ENCODE measurements at regions of chr4 and their contacts with region 1.

Region 1: DNA sequence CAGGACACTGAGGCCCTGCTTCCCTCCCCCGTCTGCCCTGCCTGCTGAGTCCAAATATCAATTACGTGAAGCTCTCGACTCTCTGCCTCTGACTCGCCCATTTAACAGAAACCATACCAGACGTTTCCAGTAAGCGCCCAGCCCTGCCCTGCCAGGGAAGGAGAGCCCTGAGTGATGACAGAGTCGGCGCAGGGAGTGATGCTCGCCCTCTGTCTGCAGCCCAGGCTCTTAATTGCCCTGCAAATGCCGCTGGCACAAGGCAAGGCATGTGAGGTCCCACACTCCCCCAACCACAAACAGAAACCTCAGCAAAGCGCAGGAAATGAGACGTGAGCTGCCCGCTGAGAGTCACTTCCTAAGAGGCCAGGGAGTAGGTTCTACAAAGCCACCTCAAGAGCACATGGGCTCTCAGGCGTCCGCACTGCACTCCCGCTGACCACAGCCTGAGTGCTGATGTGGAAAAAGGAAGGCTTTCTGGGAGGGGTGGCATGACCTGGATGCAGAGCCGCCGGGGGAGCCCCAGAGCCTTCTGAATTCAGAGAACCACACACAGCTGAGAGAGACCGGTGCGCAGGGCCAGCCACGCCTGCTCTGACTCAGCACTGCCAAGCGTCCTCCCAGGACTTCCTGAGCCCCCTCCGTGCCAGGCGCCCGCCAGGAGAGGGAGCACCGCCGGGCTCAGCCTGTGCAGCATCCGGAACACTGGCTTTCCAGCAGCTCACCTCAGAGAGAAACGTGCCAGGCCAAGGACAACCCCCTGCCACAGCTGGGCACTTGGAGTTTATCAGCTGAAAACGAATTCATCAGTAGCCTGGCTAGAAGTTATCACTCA is 5.3 kb downstream of the ZFYVE28 start:
- DNase-seq: peak; percentile 99 to 100 (median 100)
- H3K4me3 ChIP-seq: peak overlapping the region in 5 of 7 experiments; percentile 9 to 69 (median 55)
- H3K27ac ChIP-seq: peak overlapping the region in 1 of 2 experiments; percentile 59
- H3K4me1 ChIP-seq: peaks cover 8 to 61% (median 55%) of the 10 kb centered on the region in 4 experiments
- H3K27me3 ChIP-seq: peaks cover 0 to 31% (median 20%) of the 10 kb centered on the region in 5 experiments

Region 2: GRCh38 chr4:2354118-2354517 is 59.0 kb before region 1 on chr4:
- CTCF ChIA-PET with region 1: interaction called, 10 read pairs
- POLR2A ChIA-PET with region 1: no interaction called
- DNase-seq: peak; percentile 54 to 75 (median 67)
- H3K4me3 ChIP-seq: no peak overlapping the region
- H3K27ac ChIP-seq: no peak overlapping the region
- H3K4me1 ChIP-seq: no peaks in the 10 kb centered on the region
- H3K27me3 ChIP-seq: peaks cover 0 to 5% (median 0%) of the 10 kb centered on the region in 5 experiments

Region 3: GRCh38 chr4:2393353-2394270 is 19.5 kb before region 1 on chr4:
- CTCF ChIA-PET with region 1: interaction called, 19 read pairs
- POLR2A ChIA-PET with region 1: interaction called, 3 read pairs
- DNase-seq: peak in 1 of 3 donors; percentile 28
- H3K4me3 ChIP-seq: peak overlapping the region in 3 of 7 experiments; percentile 9 to 40 (median 34)
- H3K27ac ChIP-seq: peak overlapping the region in 1 of 2 experiments; percentile 30
- H3K4me1 ChIP-seq: peaks cover 5 to 36% (median 29%) of the 10 kb centered on the region in 4 experiments
- H3K27me3 ChIP-seq: peaks cover 0 to 15% (median 13%) of the 10 kb centered on the region in 5 experiments

Region 4: DNA sequence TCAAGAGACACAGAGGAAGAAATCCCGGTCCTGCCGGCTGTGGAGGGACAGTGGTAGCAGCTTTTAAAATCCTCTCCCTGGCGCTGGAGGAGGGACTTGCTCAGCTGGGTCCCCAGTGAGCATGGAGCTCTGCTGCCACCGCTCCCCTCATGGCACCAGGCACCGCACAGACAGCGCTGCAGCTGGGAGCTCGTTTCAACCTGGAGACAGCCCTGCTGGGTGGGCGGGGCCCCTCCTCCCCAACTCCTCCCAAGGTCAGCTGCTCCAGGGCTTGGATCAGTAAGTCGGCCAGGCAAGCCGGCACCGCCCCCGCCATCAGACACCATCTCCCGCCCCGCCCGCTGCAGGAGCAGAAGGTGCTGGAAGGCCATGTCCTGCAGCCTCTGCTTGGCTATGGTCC is 11.1 kb before region 1 on chr4:
- CTCF ChIA-PET with region 1: interaction called, 25 read pairs
- POLR2A ChIA-PET with region 1: interaction called, 7 read pairs
- DNase-seq: peak; percentile 29 to 52 (median 43)
- H3K4me3 ChIP-seq: peak overlapping the region in 5 of 7 experiments; percentile 10 to 65 (median 19)
- H3K27ac ChIP-seq: no peak overlapping the region
- H3K4me1 ChIP-seq: peaks cover 0 to 15% (median 13%) of the 10 kb centered on the region in 4 experiments
- H3K27me3 ChIP-seq: peaks cover 0 to 33% (median 13%) of the 10 kb centered on the region in 5 experiments

Region 5: DNA sequence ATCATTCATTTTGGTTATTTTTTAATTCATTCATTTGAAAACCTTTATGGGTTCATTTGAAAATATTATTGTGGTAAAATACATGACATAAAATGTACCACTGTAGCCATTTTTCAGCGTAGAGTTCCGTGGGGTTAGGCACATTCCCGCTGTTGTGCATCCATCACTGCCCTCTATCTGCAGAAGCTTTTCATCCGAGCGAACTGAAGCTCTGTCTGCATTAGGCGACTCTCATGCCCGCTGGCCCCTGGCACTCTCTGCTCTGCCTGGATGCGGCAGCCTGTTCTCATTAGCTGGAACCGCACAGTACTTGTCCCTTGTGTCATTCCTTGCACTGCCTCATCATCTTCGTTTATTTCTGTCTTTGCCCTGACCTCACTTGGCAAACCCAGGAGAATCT is 23.2 kb after region 1 on chr4:
- CTCF ChIA-PET with region 1: interaction called, 19 read pairs
- POLR2A ChIA-PET with region 1: no interaction called
- DNase-seq: peak in 2 of 3 donors; percentile 31 to 38
- H3K4me3 ChIP-seq: no peak overlapping the region
- H3K27ac ChIP-seq: no peak overlapping the region
- H3K4me1 ChIP-seq: peaks cover 0 to under 1% (median 0%) of the 10 kb centered on the region in 4 experiments
- H3K27me3 ChIP-seq: no peaks in the 10 kb centered on the region

Region 6: GRCh38 chr4:2441393-2442174 is 28.5 kb after region 1 on chr4:
- CTCF ChIA-PET with region 1: interaction called, 19 read pairs
- POLR2A ChIA-PET with region 1: no interaction called
- DNase-seq: peak; percentile 88 to 89 (median 89)
- H3K4me3 ChIP-seq: no peak overlapping the region
- H3K27ac ChIP-seq: no peak overlapping the region
- H3K4me1 ChIP-seq: peaks cover 0 to 16% (median 13%) of the 10 kb centered on the region in 4 experiments
- H3K27me3 ChIP-seq: no peaks in the 10 kb centered on the region

Region 7: DNA sequence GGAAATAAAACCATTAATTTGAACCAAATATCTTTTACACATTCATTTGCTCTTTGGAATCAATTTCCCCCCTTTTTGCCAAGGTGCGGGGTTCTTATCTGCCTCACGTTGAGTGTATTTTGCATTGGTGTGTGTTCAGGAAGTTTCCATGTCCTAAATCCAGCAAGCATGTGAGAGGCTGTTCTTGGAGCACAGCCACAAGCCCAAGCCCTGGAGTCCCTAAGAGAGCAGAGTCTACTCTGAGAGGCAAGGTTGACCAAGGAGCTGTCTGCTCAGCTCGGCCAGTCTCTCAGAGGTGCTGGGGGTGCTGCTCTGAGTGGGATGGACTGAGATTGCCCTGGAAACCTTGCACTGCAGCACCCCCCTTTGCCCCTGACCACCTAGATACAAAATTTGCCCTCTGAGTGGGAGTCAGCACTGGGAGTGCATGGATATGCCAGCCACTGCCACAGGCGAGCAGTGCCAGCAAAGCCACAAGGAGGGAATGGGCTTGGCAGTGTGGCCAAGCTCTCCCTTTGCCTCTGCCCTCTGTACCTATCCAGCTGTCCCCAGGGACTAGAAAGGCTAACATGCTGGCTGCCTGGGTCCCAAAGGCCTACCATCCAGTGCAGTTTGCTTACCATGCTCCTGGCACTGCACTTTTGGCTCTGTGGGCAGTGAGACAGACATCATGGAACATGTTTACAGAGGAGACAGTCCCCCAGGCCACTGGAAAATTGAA is 102.9 kb after region 1 on chr4:
- CTCF ChIA-PET with region 1: no interaction called
- POLR2A ChIA-PET with region 1: no interaction called
- DNase-seq: no peak
- H3K4me3 ChIP-seq: no peak overlapping the region
- H3K27ac ChIP-seq: no peak overlapping the region
- H3K4me1 ChIP-seq: no peaks in the 10 kb centered on the region
- H3K27me3 ChIP-seq: no peaks in the 10 kb centered on the region

Measured in common myeloid progenitor, CD34-positive (primary cell).